Activated CD4-positive, alpha-beta memory T cell treated with anti-CD3 and anti-CD28 coated beads, Interleukin-2, amount 10 ng/mL, durations not matched to agents 7 days and 5 days (primary cell): ENCODE measurements at regions of chr17 and their contacts with region 1.

Region 1: DNA sequence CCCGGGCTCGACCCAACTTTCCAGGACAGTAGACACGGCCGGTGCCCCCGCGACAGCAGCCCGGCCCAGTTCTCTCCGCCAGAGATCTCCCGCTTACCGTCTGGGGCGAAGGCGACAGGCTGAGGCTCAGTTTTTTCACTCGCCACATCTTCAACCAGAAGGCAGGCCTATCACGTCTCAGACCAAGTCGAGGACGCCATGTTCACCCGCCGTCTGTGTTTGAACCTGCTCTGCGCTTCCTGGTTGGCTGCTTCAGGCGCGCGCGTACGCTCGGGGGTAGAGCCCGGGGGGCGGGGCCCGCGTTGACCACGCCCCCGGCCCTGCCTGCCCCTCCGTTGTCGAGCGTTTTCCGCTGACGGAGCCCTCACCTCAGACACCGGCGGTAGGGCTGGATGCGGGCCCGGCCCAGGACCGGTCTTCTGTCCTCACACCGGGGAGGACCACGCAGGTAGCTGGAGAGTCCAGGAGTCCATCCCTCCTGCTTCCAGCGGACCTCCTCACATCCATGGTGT is at the start of gene SPAG5:
- DNase-seq: peak; percentile 96
- H3K4me3 Mint-ChIP-seq: peak within 1 kb of the TSS; percentile 85
- H3K27ac Mint-ChIP-seq: peak within 1 kb of the TSS; percentile 99
- H3K4me1 Mint-ChIP-seq: peaks cover 24% of the 10 kb centered on the region
- H3K27me3 Mint-ChIP-seq: no peaks in the 10 kb centered on the region
- total RNA-seq, gene SPAG5: 125 to 127 TPM

Region 2: DNA sequence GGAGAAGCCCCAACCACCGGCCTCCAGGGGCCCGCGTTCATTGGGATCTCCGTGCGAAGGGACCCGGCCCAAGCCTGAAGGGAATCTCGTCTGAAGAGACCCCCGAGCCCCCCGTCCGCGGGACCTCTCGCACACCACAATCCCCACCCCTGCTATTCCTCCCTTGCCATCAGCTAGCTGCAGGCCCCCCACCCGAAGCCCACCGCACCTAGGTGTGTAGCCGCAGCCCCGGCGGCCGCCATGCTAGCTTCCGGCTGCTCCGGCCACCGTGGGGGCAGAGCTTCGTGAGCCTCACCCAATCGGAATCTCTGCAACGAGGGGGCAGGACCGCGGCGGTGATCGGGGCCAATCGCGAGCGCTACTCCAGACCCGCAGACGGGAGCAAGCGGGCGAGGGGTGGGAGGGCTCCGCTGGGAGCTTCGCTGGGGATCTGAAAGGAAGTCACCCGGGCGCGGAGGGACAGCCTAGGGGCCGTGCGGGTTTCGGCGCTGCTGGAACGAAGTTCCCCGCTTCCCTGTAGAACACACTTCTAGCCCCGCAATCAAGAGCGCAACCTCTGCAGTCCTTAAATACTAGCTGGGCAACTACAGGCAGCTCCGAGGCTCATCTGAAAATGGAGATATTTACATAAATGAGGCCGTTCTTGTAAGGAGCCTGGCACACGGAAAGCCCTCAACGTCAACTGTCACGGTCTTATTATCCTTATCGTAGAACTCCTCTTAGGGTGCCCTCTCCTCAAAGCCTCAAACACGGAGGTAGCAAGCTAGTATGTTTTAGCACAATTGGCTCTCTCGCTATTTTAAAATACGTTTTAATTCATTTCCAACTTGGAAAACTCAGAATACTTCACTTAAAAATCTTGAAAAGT is 27.4 kb before region 1 on chr17 and contains the start of gene PIGS:
- CTCF ChIA-PET with region 1: interaction called, 6 read pairs
- POLR2A ChIA-PET with region 1: interaction called, 61 read pairs
- DNase-seq: peak; percentile 94
- H3K4me3 Mint-ChIP-seq: peak within 1 kb of the TSS; percentile 96
- H3K27ac Mint-ChIP-seq: peak within 1 kb of the TSS; percentile 84
- H3K4me1 Mint-ChIP-seq: peaks cover 60% of the 10 kb centered on the region
- H3K27me3 Mint-ChIP-seq: no peaks in the 10 kb centered on the region
- total RNA-seq, gene PIGS: 66.3 to 66.6 TPM

Region 3: DNA sequence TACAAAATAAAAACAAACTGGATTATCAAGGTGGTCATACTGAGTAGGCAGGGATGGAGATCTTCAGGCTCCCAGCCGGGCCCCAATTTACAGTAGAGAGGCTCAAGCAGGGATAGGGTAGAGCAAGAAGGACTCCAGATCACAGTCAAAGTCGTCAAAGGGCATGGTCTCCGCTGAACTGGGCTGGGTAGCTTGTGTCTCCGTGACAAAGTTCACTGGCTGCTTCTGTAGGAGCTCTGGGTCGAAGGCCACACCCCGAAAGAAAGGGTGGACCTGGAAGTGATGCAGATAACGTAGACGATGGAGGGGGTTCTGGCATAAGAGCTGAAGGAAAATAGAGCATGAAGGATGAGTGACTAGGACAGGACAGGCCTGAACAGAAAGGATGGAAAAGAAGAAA is 11.5 kb after region 1 on chr17:
- CTCF ChIA-PET with region 1: interaction called, 4 read pairs
- POLR2A ChIA-PET with region 1: interaction called, 34 read pairs
- DNase-seq: no peak
- H3K4me3 Mint-ChIP-seq: no peak overlapping the region
- H3K27ac Mint-ChIP-seq: no peak overlapping the region
- H3K4me1 Mint-ChIP-seq: no peaks in the 10 kb centered on the region
- H3K27me3 Mint-ChIP-seq: no peaks in the 10 kb centered on the region

Region 4: DNA sequence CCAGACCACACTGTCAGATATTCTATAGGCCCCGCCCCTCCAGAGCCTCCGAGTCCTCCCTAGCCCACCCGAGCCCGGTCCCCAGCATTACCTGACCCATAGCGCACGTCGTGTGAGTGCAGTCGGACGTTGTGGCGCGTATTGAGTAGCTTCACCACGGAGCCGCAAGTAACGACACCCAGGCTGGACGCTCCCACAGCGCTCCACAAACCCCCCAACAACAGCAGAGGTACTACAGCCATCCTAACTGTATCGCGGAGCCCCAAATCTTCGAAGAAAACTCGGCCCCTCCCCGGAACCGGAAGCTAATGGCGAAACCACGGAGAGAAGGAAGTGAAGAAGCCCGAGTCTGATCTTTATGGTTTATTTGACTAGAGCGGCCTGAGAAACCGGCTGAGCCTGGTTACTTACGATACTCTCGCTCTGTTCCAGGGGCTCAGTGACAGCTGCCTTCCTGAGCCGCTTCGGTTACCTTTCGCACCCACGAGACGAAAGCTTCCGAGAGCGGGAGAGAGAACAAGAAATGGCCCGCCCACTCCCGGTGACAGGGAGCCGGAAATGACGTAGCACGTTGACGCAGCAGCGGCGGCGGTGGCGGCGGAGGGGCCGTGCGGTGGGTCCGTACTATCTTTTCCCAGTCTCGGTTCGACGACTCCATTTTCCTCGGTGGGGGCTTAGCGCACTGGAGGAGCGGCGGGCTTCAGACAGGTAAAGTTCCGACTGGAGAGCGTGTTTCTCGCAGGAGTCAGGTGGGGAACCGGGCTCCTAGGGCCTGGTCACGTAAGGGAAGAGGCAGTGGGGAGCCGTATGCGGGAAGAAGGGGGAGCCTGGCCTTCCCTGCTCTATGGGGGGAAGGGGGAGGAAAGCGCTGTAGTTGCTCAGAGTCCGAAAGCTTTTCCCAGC is 63.0 kb after region 1 on chr17 and contains the starts of genes SDF2 and SUPT6H:
- CTCF ChIA-PET with region 1: no interaction called
- POLR2A ChIA-PET with region 1: interaction called, 16 read pairs
- DNase-seq: peak; percentile 94
- H3K4me3 Mint-ChIP-seq: peak within 1 kb of the TSS; percentile 98
- H3K27ac Mint-ChIP-seq: peak within 1 kb of the TSS; percentile 98
- H3K4me1 Mint-ChIP-seq: peaks cover 52% of the 10 kb centered on the region
- H3K27me3 Mint-ChIP-seq: no peaks in the 10 kb centered on the region
- total RNA-seq, gene SDF2: 49.0 to 52.9 TPM
- total RNA-seq, gene SUPT6H: 60.7 to 65.8 TPM